ENCODE measurements at regions of chr6 and their contacts with region 1.

Region 1: GRCh38 chr6:11585426-11586016 is 48.0 kb downstream of the TMEM170B start:
- DNase-seq: no peak
- ATAC-seq: no peak

Region 2: DNA sequence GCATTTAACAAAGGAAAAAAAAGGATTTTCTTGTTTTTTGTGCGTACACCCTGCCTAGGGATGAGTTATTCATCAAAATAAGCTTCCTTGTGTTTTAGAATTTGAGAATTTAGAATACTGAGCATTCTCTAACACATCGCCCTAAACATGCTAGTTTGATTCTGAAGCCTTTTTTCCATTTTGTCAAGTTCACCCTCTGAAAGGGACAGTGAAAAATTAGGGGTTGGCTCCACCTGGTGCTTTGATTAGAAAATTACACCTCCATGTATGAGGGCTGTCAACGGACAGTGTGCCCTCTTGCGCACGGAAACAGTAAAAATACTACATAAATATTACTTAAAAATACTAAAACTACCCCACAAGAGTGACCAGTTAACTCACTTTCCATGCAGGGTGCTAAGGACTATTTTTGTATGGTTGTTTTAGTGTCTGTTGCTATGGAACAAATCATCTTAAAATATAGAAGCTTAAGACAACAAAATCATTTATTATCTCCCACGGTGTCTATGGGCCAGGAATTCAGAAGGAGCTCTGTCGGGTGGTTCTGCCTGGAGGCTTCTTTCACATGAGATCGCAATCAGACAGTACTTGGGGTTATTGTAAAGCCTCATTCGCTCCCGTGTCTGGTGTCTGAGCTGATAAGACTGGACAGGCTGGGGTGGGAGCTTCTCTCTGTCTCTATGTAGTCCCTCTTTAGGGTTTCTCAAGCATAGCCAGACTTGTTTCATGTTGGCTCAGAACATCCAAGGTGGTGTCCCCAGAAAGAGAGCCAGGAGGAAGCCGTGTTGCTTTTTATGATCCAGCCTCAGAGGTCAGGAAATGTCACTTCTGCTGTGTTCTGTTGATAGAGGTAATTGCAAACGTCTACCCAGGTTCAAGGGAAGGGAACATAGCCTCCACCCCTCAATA is 89.1 kb before region 1 on chr6:
- intact Hi-C with region 1: no loop called
- DNase-seq: no peak
- ATAC-seq: peak; percentile 89

Region 3: GRCh38 chr6:11653028-11653583 is 67.6 kb after region 1 on chr6:
- intact Hi-C with region 1: loop called (anchors 2 kb)
- DNase-seq: no peak
- ATAC-seq: no peak

Region 4: GRCh38 chr6:11912426-11912825 is 326.9 kb after region 1 on chr6:
- intact Hi-C with region 1: no loop called
- DNase-seq: no peak
- ATAC-seq: no peak

Region 5: GRCh38 chr6:12001004-12001705 is 415.6 kb after region 1 on chr6:
- intact Hi-C with region 1: no loop called
- DNase-seq: peak; percentile 66
- ATAC-seq: peak; percentile 65

Region 6: DNA sequence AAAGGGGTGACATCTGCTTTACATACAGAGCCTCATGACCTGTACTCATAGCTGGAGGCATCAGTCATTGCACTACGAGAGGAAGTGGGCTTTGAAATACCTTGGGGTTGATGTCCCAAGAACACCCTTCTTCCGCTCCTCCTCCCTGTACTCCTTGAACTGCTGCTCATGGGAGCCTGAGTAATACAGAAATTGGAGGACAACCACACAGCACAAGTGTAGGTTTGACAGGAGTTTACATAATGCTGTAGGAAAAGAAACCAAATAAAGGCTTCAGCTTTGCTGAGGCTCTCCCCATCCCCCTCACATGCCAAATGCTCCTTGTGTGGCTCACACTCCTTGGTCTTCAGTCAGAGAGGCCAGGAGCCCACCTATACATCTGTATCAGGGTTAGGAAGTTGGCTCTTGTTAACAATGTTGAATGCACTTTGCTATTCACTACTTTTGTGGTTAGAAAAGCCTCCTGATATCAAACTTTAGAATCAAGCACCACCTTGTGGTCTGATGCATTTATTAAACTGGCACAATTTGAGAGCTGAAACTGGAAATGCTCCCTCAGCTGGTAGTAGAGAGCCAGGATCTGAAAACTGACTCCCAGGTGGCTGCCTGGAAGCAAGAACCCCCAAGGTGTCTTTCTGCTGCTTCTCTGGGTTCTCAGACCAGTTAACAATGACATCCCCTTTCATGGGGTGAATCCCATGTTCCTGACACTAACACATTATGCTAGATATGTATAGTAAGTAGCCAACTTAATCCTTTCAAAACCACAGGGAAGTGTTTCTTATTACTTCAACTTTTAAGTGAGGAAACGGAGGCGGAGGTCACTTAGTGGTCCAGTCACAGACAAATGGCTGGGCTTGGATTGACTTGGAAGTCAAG is 648.4 kb after region 1 on chr6:
- intact Hi-C with region 1: loop called (anchors 5 kb)
- DNase-seq: no peak
- ATAC-seq: peak; percentile 76

Region 7: GRCh38 chr6:12289933-12290820 is 704.7 kb after region 1 on chr6 and contains the start of gene EDN1:
- intact Hi-C with region 1: loop called (anchors 5 kb)
- DNase-seq: peak; percentile 87
- ATAC-seq: peak; percentile 75
- total RNA-seq, gene EDN1: 2.9 TPM

Region 8: DNA sequence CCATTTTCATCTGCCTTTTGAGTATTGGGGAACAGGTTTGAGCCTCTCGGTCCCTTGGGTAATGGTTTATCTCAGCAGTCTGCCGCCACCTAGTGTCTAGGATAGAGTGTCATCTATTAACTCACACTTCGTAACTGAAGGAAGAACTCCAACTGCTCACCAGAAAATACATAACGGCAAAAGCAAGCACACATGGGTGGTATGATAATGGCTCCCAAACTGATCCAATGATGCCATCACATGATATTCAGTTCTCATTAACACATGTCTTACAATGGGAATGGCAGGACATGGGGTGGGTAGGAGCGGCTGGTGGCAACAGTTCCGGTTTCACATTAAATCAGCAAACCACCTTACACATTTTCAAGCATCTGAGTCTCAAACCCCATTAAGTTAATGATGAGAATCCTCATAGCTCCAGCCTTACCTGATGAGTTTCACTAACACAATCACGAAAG is 1020.4 kb after region 1 on chr6:
- intact Hi-C with region 1: loop called (anchors 5 kb)
- DNase-seq: no peak
- ATAC-seq: peak; percentile 60

Region 9: GRCh38 chr6:12890171-12890790 is 1304.8 kb after region 1 on chr6:
- intact Hi-C with region 1: loop called (anchors 5 kb)
- DNase-seq: no peak
- ATAC-seq: no peak